ENCODE measurements at regions of chr1 and their contacts with region 1.

Region 1: GRCh38 chr1:55277377-55278130 is 62.4 kb upstream of the USP24 start:
- DNase-seq: peak; percentile 82
- H3K4me3 ChIP-seq: peak overlapping the region; percentile 11
- H3K27ac ChIP-seq: no peak overlapping the region
- H3K4me1 ChIP-seq: peaks cover 16% of the 10 kb centered on the region
- CTCF ChIP-seq: peak; percentile 92

Region 2: DNA sequence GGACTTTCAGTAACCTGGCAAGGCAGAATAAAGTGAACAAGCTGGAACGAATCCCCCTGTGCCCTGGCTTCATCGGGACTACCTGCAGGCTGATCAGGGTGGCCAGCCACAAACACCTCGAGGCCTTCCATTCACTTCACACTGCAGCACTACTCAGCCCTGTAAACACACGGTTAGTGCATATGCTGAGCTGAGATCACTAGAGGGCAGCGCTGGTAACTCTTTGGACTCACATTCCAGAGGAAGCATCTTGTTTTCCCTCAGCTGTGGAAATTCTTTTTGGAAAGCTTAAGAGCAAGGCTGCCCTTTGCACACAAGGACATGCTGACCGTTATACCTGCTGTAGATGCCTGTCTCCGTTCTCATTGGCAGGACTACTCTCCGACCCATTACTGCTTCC is 206.1 kb before region 1 on chr1:
- CTCF ChIA-PET with region 1: no interaction called
- POLR2A ChIA-PET with region 1: no interaction called
- intact Hi-C with region 1: loop called (anchors 2 kb)
- DNase-seq: peak; percentile 27
- H3K4me3 ChIP-seq: no peak overlapping the region
- H3K27ac ChIP-seq: no peak overlapping the region
- H3K4me1 ChIP-seq: no peaks in the 10 kb centered on the region
- CTCF ChIP-seq: peak; percentile 75

Region 3: DNA sequence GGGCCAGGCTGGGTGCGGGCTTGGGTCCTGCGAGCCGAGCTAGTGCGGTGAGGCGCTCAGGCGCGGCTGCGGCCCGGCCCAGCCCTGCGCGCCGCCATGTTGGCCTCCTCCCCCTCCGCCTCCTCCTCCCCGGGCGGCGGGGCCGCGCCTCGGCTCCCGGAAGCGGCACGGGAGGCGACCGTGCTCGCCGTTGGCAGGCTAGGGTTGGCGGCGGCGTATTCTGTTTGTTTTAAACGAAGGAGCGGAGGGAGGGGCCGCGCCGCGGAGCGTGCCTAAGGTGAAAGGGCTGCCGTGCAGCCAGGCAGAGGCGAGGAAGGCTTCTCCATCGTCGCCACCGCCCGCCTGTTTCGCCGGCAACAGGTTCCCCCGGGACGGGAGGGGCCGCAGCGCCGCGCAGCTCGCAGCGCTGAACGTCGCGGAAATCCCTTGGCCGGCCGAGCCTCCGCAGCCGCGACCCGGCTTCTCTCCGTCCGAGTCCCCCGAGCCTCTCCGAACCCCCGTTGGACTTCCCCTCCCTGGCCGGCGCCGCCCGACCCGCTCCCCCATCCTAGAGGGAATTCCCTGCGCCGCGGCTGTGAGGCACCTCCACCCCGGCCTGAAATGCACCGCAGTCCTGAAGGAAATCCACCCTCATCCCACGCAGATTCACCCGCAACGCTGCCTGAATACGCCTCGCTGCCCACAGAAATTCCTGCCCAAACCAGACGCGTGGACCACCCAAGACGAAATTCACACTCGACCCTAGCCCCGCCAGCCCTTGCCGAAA is 62.1 kb before region 1 on chr1 and contains the start of gene USP24:
- CTCF ChIA-PET with region 1: no interaction called
- POLR2A ChIA-PET with region 1: no interaction called
- intact Hi-C with region 1: loop called (anchors 1 kb)
- DNase-seq: peak; percentile 84
- H3K4me3 ChIP-seq: peak within 1 kb of the TSS; percentile 94
- H3K27ac ChIP-seq: peak within 1 kb of the TSS; percentile 68
- H3K4me1 ChIP-seq: peaks cover 51% of the 10 kb centered on the region
- CTCF ChIP-seq: no peak
- total RNA-seq, gene USP24: 35.1 and 42.5 TPM in 2 replicates